Calu3 (cell line): ENCODE measurements at regions of chr3 and their contacts with region 1.

Region 1: DNA sequence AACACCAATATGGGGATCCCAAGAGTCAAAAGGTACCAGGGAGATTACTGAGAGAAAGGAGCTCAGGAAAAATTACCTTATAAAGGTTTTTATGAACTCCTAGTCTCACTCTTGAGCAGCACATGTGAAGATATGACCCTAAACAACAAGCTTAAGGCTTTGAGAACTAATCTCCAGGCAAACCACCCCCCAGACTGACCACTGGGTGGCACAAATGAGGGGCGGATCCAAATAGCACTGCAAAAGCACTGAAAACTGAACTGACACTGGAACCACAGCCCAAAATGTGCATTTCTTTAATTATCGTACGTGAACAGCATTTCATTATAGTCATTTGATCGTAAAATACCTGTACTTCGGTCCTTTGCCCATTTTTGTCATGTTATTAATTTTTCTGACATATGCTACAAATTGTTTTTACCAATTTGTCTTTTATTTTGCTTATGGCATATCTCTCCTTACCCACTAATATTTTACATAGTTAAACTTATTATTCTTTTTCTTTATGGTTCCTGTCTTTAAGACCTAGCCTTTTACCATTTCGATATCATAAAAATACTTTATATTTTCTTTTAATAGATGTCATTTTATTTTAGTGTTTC is 31.5 kb upstream of the TFDP2 start:
- DNase-seq: peak; percentile 75
- H3K4me3 Mint-ChIP-seq: no peak overlapping the region
- H3K27ac Mint-ChIP-seq: no peak overlapping the region
- H3K4me1 Mint-ChIP-seq: no peaks in the 10 kb centered on the region
- H3K27me3 Mint-ChIP-seq: no peaks in the 10 kb centered on the region
- CTCF ChIP-seq: peak; percentile 77

Region 2: DNA sequence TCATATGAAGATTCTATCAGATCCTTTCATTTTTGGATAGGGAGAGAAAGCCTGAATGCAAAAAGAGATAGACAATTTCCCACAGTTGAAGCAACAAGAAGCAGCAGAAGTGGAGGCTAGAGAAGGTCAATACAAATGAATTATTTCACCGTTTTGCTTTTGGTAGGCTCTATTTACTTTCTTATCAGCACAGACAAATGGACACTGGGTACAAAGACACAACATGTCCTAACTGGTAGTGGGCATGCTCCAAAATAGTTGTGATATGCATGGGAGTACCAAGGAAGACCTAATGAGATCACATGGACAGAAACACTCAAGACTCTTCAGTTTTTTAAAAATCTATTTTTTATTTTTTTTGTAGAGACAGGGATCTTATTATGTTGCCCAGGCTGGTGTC is 167.6 kb after region 1 on chr3:
- CTCF ChIA-PET with region 1: no interaction called
- intact Hi-C with region 1: no loop called
- DNase-seq: no peak
- H3K4me3 Mint-ChIP-seq: no peak overlapping the region
- H3K27ac Mint-ChIP-seq: no peak overlapping the region
- H3K4me1 Mint-ChIP-seq: no peaks in the 10 kb centered on the region
- H3K27me3 Mint-ChIP-seq: no peaks in the 10 kb centered on the region
- CTCF ChIP-seq: no peak

Region 3: DNA sequence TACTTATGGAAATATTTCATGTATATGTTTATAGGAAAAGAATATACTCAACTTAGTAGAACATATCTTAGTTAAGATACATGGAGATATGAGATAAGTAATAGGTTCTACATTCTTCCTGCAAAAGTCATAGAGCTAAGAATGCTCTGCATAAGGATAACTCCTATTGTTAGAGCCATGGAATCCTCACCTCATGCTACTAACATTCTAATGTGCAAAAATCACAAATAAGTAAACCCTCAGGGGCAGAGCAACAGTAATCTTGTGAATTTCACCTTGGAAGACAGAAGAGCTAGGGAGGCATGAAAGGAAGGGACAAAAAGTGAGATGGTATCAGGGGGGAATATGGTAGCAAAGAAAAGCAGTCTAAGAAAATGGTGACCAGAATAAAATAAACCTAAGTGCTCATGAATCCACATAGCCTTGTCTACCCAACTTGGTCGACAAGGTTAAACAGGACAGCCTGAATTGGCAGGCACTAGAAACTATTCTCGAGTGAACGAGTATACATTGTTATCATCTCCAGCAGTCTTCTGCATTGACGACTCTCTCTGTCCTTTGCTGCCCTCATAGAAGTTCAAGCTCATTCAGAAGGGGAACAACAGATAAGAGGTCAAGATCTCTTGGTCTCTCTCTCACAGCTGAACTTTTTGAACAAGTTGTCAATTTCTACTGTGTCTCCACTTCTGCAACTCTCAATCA is 214.2 kb after region 1 on chr3:
- CTCF ChIA-PET with region 1: no interaction called
- intact Hi-C with region 1: loop called (anchors 10 kb)
- DNase-seq: no peak
- H3K4me3 Mint-ChIP-seq: no peak overlapping the region
- H3K27ac Mint-ChIP-seq: no peak overlapping the region
- H3K4me1 Mint-ChIP-seq: no peaks in the 10 kb centered on the region
- H3K27me3 Mint-ChIP-seq: no peaks in the 10 kb centered on the region
- CTCF ChIP-seq: no peak

Region 4: DNA sequence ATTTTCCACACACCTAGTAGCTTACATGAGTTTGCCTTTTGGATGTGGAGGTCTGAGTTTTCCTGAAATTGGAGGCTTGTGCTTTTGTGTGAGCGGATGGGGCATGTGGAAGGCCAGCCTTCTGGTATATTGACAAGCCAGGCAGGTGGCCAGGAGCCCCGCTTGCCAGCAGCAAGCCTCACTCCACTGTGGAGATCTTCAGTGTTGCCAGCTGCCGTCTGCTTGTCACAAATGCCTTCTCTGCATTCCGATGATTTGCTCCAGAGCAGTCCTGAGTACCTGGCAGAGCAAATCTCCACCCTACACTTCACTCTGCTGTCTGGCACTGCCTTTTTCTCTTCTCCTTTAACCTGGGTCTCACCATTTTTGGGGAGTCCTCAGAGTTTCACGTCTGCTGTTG is 909.6 kb after region 1 on chr3:
- CTCF ChIA-PET with region 1: interaction called, 10 read pairs
- intact Hi-C with region 1: no loop called
- DNase-seq: no peak
- H3K4me3 Mint-ChIP-seq: no peak overlapping the region
- H3K27ac Mint-ChIP-seq: no peak overlapping the region
- H3K4me1 Mint-ChIP-seq: no peaks in the 10 kb centered on the region
- H3K27me3 Mint-ChIP-seq: peaks cover 17% of the 10 kb centered on the region
- CTCF ChIP-seq: no peak